GM12878 (cell line): ENCODE measurements at regions of chr10 and their contacts with region 1.

Region 1: DNA sequence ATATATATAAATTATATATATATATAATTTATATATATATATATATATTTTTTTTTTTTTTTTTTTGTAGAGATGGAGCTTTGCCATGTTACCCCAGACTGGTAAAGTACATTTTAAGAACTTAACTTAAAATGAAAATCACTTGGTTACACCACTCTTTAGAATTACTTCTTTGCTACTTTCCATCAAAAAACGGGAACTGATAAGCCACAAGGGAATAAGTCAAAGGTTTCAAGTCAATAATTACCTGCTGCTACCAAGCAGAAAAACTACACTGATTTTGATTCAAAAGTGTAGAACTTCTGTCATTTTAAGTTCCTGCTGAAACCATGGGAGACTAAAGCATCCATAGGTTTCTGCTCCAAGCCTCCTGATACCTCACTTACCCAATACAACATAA is 12.2 kb downstream of the PPA1 start:
- DNase-seq: no peak
- ATAC-seq: peak; percentile 41
- H3K4me3 ChIP-seq: peak overlapping the region; percentile 14; the same call in 1 of the 2 replicates
- H3K27ac ChIP-seq: peak overlapping the region; percentile 52; the same call in 1 of the 2 replicates
- H3K4me1 ChIP-seq: peaks cover 21% of the 10 kb centered on the region
- H3K27me3 ChIP-seq: no peaks in the 10 kb centered on the region
- CTCF ChIP-seq: no peak
- EP300 ChIP-seq: no peak
- POLR2A ChIP-seq: no peak
- RAD21 ChIP-seq: no peak

Region 2: GRCh38 chr10:69703766-69704638 is 517.0 kb before region 1 on chr10:
- CTCF ChIA-PET with region 1: no interaction called
- POLR2A ChIA-PET with region 1: no interaction called
- RAD21 ChIA-PET with region 1: no interaction called
- SMC1A ChIA-PET with region 1: no interaction called
- in situ Hi-C with region 1: no loop called
- intact Hi-C with region 1: no loop called
- DNase-seq: no peak
- ATAC-seq: no peak
- H3K4me3 ChIP-seq: no peak overlapping the region
- H3K27ac ChIP-seq: no peak overlapping the region
- H3K4me1 ChIP-seq: no peaks in the 10 kb centered on the region
- H3K27me3 ChIP-seq: peaks cover 0 to 2% of the 10 kb centered on the region in 2 experiments; a peak in 2 of 4 replicates
- CTCF ChIP-seq: no peak
- EP300 ChIP-seq: no peak
- POLR2A ChIP-seq: no peak
- RAD21 ChIP-seq: no peak

Region 3: GRCh38 chr10:70260259-70260658 is 39.2 kb after region 1 on chr10:
- CTCF ChIA-PET with region 1: interaction called, 133 read pairs
- POLR2A ChIA-PET with region 1: interaction called, 4 read pairs
- RAD21 ChIA-PET with region 1: interaction called, 85 read pairs
- SMC1A ChIA-PET with region 1: interaction called, 45 read pairs
- in situ Hi-C with region 1: no loop called
- intact Hi-C with region 1: no loop called
- DNase-seq: no peak
- ATAC-seq: no peak
- H3K4me3 ChIP-seq: no peak overlapping the region
- H3K27ac ChIP-seq: no peak overlapping the region
- H3K4me1 ChIP-seq: no peaks in the 10 kb centered on the region
- H3K27me3 ChIP-seq: peaks cover 0 to 8% of the 10 kb centered on the region in 2 experiments; a peak in 3 of 4 replicates
- CTCF ChIP-seq: no peak
- EP300 ChIP-seq: no peak
- POLR2A ChIP-seq: no peak
- RAD21 ChIP-seq: no peak

Region 4: GRCh38 chr10:70283445-70284399 is 62.7 kb after region 1 on chr10 and contains the start of gene NPFFR1:
- CTCF ChIA-PET with region 1: interaction called, 12 read pairs
- POLR2A ChIA-PET with region 1: no interaction called
- RAD21 ChIA-PET with region 1: interaction called, 3 read pairs
- SMC1A ChIA-PET with region 1: interaction called, 4 read pairs
- in situ Hi-C with region 1: no loop called
- intact Hi-C with region 1: no loop called
- DNase-seq: no peak
- ATAC-seq: peak; percentile 53
- H3K4me3 ChIP-seq: no peak within 1 kb of the TSS
- H3K27ac ChIP-seq: no peak within 1 kb of the TSS
- H3K4me1 ChIP-seq: no peaks in the 10 kb centered on the region
- H3K27me3 ChIP-seq: peaks cover 7 to 12% of the 10 kb centered on the region in 2 experiments
- CTCF ChIP-seq: peak in 1 of 3 experiments; percentile 15; a peak in 1 of 6 replicates
- EP300 ChIP-seq: no peak
- POLR2A ChIP-seq: no peak
- RAD21 ChIP-seq: no peak
- polyA plus RNA-seq, gene NPFFR1: not detected

Region 5: DNA sequence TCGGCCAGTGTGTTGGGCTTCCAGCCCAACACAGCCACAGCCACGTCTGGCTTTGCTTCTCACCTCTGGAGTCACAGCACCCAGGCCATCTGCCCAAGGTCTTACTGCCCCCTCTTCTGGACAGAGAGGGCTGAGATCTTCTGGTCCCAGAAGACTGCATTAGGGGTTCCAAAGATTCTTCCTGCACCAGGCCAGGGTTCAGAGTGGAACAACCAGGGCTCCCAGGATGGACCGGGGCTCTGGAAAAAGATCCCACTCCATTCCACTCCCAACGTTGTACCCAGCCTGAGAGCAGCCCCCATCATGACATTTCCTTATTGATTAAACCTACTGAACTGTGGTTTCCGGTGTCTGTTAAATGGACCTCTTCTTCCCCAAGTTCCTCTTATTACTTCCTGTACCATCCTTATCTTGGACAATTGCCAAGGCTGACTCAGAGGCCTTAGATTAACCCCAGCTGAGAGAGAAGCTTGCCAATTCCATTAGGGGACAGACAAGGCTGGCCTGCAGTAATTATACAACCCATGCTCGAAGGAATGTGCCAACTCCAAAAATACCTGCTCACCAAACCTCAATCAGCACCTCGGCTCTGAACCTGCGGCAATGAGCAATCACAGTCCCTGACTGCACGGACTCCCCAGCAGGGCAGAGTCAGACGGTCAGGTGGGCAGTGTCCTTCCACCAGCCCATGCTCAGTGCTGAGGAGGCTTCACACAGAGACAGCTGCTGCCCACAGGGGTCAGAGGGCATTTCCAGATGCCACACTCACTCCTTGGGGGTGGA is 110.6 kb after region 1 on chr10:
- CTCF ChIA-PET with region 1: interaction called, 14 read pairs
- POLR2A ChIA-PET with region 1: interaction called, 4 read pairs
- RAD21 ChIA-PET with region 1: interaction called, 4 read pairs
- SMC1A ChIA-PET with region 1: interaction called, 4 read pairs
- in situ Hi-C with region 1: no loop called
- intact Hi-C with region 1: no loop called
- DNase-seq: peak; percentile 72
- ATAC-seq: peak; percentile 91
- H3K4me3 ChIP-seq: no peak overlapping the region
- H3K27ac ChIP-seq: peak overlapping the region; percentile 43
- H3K4me1 ChIP-seq: peaks cover 16% of the 10 kb centered on the region
- H3K27me3 ChIP-seq: no peaks in the 10 kb centered on the region
- CTCF ChIP-seq: peak; percentile 14 to 30 (median 27); a peak in 4 of 6 replicates
- EP300 ChIP-seq: no peak
- POLR2A ChIP-seq: no peak
- RAD21 ChIP-seq: peak; percentile 45

Region 6: GRCh38 chr10:70363971-70364771 is 143.1 kb after region 1 on chr10:
- CTCF ChIA-PET with region 1: interaction called, 611 read pairs
- POLR2A ChIA-PET with region 1: interaction called, 18 read pairs
- RAD21 ChIA-PET with region 1: interaction called, 675 read pairs
- SMC1A ChIA-PET with region 1: interaction called, 408 read pairs
- in situ Hi-C with region 1: loop called (anchors 5 kb)
- intact Hi-C with region 1: loop called (anchors 1 kb)
- DNase-seq: peak; percentile 65
- ATAC-seq: peak; percentile 96
- H3K4me3 ChIP-seq: no peak overlapping the region
- H3K27ac ChIP-seq: peak overlapping the region; percentile 69
- H3K4me1 ChIP-seq: peaks cover 18% of the 10 kb centered on the region
- H3K27me3 ChIP-seq: no peaks in the 10 kb centered on the region
- CTCF ChIP-seq: peak; percentile 84 to 96 (median 86); a peak in 5 of 6 replicates
- EP300 ChIP-seq: no peak
- POLR2A ChIP-seq: no peak
- RAD21 ChIP-seq: peak; percentile 100